B cell (primary cell): ENCODE measurements at regions of chr7 and their contacts with region 1.

Region 1: DNA sequence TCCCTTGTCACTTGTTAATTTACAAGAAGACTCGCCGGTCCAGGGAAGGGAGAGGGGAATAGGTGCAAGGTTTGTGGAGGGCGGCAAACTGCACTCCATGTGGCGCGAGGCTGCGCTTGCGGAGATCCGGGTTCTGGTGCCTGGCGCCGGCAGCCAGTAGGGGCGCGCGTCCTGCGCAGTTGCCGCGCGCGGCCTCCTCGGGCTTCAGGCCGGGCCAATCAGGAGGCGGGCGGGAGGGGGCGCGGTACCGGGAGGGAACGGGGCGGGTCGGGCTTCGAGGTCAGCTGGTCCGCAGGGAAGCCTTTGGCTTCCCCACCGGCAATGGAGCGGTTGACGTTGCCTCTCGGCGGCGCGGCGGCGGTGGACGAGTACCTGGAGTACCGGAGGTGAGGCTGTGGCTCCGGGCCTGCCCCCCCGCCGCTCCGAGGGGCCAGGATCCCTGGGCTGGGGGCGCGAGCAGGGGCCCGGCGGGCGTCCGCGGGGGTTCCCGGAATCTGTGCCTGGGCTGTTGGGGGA is at the start of gene FAM221A:
- DNase-seq: peak; percentile 89
- ATAC-seq: peak; percentile 99
- H3K4me3 ChIP-seq: peak within 1 kb of the TSS; percentile 51 to 85 (median 75)
- H3K4me3 Mint-ChIP-seq: peak within 1 kb of the TSS; percentile 90
- H3K27ac ChIP-seq: peak within 1 kb of the TSS in 1 of 2 donors; percentile 57
- H3K27ac Mint-ChIP-seq: peak within 1 kb of the TSS; percentile 81
- H3K4me1 ChIP-seq: peaks cover 0 to 15% of the 10 kb centered on the region in 2 donors
- H3K4me1 Mint-ChIP-seq: peaks cover 9% of the 10 kb centered on the region
- H3K27me3 ChIP-seq: no peaks in the 10 kb centered on the region
- H3K27me3 Mint-ChIP-seq: no peaks in the 10 kb centered on the region
- CTCF ChIP-seq: peak; percentile 80
- total RNA-seq, gene FAM221A: 10.7 and 10.8 TPM in 2 replicates

Region 2: GRCh38 chr7:23546897-23547572 is 132.9 kb before region 1 on chr7:
- CTCF ChIA-PET with region 1: interaction called, 3 read pairs
- POLR2A ChIA-PET with region 1: no interaction called
- intact Hi-C with region 1: loop called (anchors 1 kb)
- DNase-seq: peak; percentile 90
- ATAC-seq: peak; percentile 91
- H3K4me3 ChIP-seq: peak overlapping the region in 1 of 5 experiments; percentile 18
- H3K4me3 Mint-ChIP-seq: no peak overlapping the region
- H3K27ac ChIP-seq: no peak overlapping the region
- H3K27ac Mint-ChIP-seq: no peak overlapping the region
- H3K4me1 ChIP-seq: peaks cover 8 to 13% of the 10 kb centered on the region in 2 donors
- H3K4me1 Mint-ChIP-seq: peaks cover 15% of the 10 kb centered on the region
- H3K27me3 ChIP-seq: no peaks in the 10 kb centered on the region
- H3K27me3 Mint-ChIP-seq: no peaks in the 10 kb centered on the region
- CTCF ChIP-seq: peak; percentile 98

Region 3: DNA sequence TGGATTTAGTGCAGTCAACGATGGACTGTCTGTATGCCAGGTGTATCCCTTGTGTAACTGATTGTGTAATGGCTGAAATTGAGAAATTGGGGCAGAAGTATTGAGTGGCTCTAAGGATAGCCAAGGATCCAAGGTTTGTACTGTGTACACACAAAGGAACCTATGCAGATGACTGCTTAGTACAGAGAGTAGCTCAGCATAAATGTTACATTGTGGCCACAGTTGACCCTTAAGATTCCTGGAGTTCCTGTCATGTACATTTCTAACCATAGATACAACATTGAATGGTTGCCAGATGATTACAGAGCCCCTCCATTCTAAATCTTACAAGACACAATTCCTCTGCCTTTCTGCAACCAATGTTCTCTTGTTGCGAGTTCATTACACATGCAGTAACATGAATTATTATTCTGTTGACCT is 57.4 kb before region 1 on chr7:
- CTCF ChIA-PET with region 1: no interaction called
- POLR2A ChIA-PET with region 1: no interaction called
- intact Hi-C with region 1: no loop called
- DNase-seq: no peak
- ATAC-seq: no peak
- H3K4me3 ChIP-seq: no peak overlapping the region
- H3K4me3 Mint-ChIP-seq: no peak overlapping the region
- H3K27ac ChIP-seq: no peak overlapping the region
- H3K27ac Mint-ChIP-seq: no peak overlapping the region
- H3K4me1 ChIP-seq: no peaks in the 10 kb centered on the region
- H3K4me1 Mint-ChIP-seq: no peaks in the 10 kb centered on the region
- H3K27me3 ChIP-seq: no peaks in the 10 kb centered on the region
- H3K27me3 Mint-ChIP-seq: no peaks in the 10 kb centered on the region
- CTCF ChIP-seq: no peak

Region 4: DNA sequence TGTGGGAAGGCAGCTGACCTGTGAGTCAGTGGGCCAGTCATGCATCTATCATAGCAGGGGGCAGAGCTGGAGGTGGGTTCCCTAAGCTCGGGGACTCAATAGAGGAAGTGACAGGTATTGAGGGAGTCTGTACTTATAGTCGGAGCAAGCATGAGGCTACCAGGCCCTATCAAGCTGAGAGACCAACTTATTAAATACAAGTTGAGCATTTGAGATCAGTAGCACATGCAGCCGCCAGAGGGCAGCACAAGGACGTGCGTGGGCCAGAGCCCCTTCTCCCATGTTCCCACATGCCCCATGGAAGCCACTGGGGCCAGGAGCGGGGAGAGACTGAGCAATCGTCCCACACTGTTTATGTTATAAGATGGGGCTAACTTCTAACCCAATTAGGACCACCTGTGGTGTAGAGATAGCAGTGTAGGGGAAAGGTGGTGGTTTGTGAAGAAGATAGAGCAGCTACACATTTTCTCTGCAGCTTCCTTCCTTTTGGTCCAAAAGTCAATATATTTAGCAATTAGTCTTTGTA is 17.0 kb after region 1 on chr7:
- CTCF ChIA-PET with region 1: interaction called, 21 read pairs
- POLR2A ChIA-PET with region 1: no interaction called
- intact Hi-C with region 1: no loop called
- DNase-seq: peak; percentile 67
- ATAC-seq: peak; percentile 45
- H3K4me3 ChIP-seq: no peak overlapping the region
- H3K4me3 Mint-ChIP-seq: no peak overlapping the region
- H3K27ac ChIP-seq: no peak overlapping the region
- H3K27ac Mint-ChIP-seq: no peak overlapping the region
- H3K4me1 ChIP-seq: no peaks in the 10 kb centered on the region
- H3K4me1 Mint-ChIP-seq: peaks cover 2% of the 10 kb centered on the region
- H3K27me3 ChIP-seq: no peaks in the 10 kb centered on the region
- H3K27me3 Mint-ChIP-seq: no peaks in the 10 kb centered on the region
- CTCF ChIP-seq: peak; percentile 85